Activated naive CD4-positive, alpha-beta T cell treated with anti-CD3 and anti-CD28 coated beads, Interleukin-2, amount 10 ng/mL, durations not matched to agents 7 days and 5 days (primary cell): ENCODE measurements at regions of chr6 and their contacts with region 1.

Region 1: DNA sequence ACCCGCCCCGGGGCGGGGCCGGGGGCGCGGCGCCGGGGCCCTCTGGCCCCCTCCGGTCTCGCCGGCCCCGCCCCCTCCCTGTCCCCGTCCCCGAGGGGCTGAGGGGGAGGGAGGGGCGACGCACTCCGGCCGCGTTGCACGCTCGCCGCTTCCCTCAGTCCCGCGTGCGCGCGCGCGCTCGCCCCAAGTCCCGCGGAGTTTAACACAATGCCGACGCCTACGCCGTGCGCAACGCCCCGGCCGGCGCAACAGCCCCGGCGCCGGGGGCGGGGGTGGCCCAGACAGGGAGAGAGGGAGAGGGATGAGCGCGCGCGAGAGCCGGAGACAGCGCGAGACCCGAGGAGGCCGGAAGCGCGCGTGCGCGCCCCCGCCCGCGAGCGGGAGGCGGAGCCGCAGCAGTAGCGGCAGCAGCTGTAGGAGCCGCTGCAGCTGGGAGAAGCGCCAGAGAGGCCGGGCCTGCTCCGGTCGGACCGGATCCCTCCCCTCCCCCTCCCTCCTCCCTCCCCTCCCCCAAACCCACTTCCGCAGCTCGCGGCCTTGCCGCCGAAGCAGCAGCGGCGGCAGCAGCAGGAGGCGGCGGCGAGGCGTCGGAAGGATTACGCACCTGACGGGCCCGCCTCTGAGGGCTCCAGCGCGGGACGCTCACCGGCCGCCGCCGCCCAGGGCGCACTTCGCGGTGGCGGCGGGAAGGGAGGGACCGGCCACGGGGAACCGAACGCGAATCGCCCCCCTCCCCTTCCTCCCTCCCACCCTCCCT is 905 bp downstream of the ZBTB2 start:
- DNase-seq: peak; percentile 97
- H3K4me3 Mint-ChIP-seq: peak overlapping the region; percentile 99
- H3K27ac Mint-ChIP-seq: peak overlapping the region; percentile 100
- H3K4me1 Mint-ChIP-seq: peaks cover 63% of the 10 kb centered on the region
- H3K27me3 Mint-ChIP-seq: no peaks in the 10 kb centered on the region

Region 2: GRCh38 chr6:151196555-151196954 is 193.9 kb before region 1 on chr6:
- CTCF ChIA-PET with region 1: no interaction called
- DNase-seq: no peak
- H3K4me3 Mint-ChIP-seq: no peak overlapping the region
- H3K27ac Mint-ChIP-seq: no peak overlapping the region
- H3K4me1 Mint-ChIP-seq: no peaks in the 10 kb centered on the region
- H3K27me3 Mint-ChIP-seq: peaks cover 10% of the 10 kb centered on the region

Region 3: GRCh38 chr6:151409260-151409659 is 18.8 kb after region 1 on chr6:
- CTCF ChIA-PET with region 1: interaction called, 24 read pairs
- DNase-seq: no peak
- H3K4me3 Mint-ChIP-seq: no peak overlapping the region
- H3K27ac Mint-ChIP-seq: no peak overlapping the region
- H3K4me1 Mint-ChIP-seq: peaks cover 23% of the 10 kb centered on the region
- H3K27me3 Mint-ChIP-seq: no peaks in the 10 kb centered on the region

Region 4: GRCh38 chr6:151765444-151765886 is 375.0 kb after region 1 on chr6:
- CTCF ChIA-PET with region 1: no interaction called
- DNase-seq: peak; percentile 65
- H3K4me3 Mint-ChIP-seq: no peak overlapping the region
- H3K27ac Mint-ChIP-seq: no peak overlapping the region
- H3K4me1 Mint-ChIP-seq: peaks cover 40% of the 10 kb centered on the region
- H3K27me3 Mint-ChIP-seq: peaks cover 4% of the 10 kb centered on the region